Posterior cingulate gyrus (tissue), 11 donors: ENCODE measurements at regions of chr7 and their contacts with region 1.

Region 1: DNA sequence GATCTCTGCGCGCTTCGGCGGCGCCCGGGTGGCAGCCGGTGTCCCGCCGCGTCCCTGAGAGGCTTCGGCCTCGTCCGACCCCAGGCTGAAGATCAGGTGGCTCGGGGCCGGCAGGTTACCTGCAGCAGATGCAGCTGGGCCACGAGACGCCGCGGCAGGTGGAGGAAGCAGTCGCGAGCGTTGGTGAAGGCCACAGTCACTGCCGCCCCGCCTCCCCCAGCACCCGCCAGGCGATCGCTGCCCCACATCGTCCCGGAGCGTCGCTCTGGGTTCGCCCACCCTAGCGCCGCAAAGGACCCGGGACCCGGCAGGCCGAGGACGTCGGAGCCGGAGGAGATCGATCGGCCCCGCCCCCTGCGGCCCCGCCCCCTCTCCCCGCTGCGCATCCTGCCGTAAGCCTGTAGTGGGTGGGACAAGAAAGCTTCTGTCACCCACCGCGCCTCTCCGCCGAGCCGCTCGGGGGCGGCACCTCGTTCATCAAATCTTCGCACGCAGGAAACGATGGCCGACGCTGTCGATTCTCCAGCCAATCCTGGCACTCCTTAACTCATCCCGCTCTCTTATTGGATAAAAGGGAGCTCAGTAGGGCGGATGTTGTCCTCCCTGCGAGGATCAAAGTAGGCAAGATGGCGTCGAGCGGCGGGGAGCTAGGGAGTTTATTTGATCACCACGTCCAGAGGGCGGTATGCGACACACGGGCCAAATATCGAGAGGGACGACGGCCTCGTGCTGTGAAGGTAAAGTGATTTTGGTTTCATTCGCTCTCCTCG is at the starts of genes PEX1 and RBM48:
- DNase-seq: peak; percentile 91 to 100 (median 96)

Region 2: DNA sequence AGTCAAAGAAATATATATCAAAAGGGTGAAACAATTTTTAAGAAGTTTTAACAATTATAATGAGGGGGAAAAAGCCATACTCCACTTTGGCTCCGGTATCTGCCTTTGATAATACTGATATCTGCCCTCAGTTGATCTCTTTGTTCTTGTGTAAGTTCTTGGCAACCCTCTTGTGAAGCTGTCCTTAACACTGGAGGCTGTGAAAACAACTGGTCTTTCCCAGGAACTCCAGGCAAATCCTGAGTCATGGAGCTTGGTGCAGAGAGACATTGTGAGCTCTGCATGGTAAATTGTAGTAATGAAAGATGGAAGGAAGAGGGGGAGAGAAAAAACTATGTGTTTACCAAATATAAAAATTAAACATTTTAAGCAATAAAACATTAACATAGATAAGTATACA is 38.7 kb before region 1 on chr7:
- intact Hi-C with region 1: no loop called
- DNase-seq: no peak

Region 3: GRCh38 chr7:92590711-92591310 is 62.4 kb after region 1 on chr7:
- intact Hi-C with region 1: loop called (anchors 2 kb)
- DNase-seq: peak in 2 of 10 donors; percentile 67 to 73

Region 4: GRCh38 chr7:93350338-93350737 is 822.0 kb after region 1 on chr7:
- intact Hi-C with region 1: no loop called
- DNase-seq: no peak